MCF 10A (cell line): ENCODE measurements at regions of chr4 and their contacts with region 1.

Region 1: GRCh38 chr4:44760142-44760898 is 34.0 kb upstream of the GNPDA2 start:
- DNase-seq: peak; percentile 59
- H3K4me3 Mint-ChIP-seq: no peak overlapping the region
- H3K27ac Mint-ChIP-seq: no peak overlapping the region
- H3K4me1 Mint-ChIP-seq: peaks cover 6% of the 10 kb centered on the region
- H3K27me3 Mint-ChIP-seq: no peaks in the 10 kb centered on the region
- CTCF ChIP-seq: peak; percentile 48

Region 2: DNA sequence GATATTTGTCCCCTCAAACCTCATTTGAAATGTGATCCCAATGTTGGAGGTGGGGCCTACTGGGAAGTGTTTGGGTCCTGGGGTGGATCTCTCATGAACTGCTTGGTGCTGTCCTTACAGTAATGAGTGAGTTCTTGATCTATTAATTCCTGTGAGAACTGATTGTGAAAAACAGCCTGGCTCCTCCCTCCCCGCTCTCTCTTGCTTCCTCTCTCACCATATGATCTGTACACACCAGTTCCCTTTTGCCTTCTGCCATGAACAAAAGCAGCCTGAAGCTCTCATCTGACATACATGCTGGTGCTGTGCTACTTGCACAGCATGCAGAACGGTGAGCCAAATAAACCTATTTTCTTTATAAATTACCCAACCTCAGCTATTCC is 97.7 kb before region 1 on chr4:
- CTCF ChIA-PET with region 1: no interaction called
- POLR2A ChIA-PET with region 1: no interaction called
- intact Hi-C with region 1: no loop called
- DNase-seq: no peak
- H3K4me3 Mint-ChIP-seq: no peak overlapping the region
- H3K27ac Mint-ChIP-seq: no peak overlapping the region
- H3K4me1 Mint-ChIP-seq: peaks cover 13% of the 10 kb centered on the region
- H3K27me3 Mint-ChIP-seq: no peaks in the 10 kb centered on the region
- CTCF ChIP-seq: no peak

Region 3: DNA sequence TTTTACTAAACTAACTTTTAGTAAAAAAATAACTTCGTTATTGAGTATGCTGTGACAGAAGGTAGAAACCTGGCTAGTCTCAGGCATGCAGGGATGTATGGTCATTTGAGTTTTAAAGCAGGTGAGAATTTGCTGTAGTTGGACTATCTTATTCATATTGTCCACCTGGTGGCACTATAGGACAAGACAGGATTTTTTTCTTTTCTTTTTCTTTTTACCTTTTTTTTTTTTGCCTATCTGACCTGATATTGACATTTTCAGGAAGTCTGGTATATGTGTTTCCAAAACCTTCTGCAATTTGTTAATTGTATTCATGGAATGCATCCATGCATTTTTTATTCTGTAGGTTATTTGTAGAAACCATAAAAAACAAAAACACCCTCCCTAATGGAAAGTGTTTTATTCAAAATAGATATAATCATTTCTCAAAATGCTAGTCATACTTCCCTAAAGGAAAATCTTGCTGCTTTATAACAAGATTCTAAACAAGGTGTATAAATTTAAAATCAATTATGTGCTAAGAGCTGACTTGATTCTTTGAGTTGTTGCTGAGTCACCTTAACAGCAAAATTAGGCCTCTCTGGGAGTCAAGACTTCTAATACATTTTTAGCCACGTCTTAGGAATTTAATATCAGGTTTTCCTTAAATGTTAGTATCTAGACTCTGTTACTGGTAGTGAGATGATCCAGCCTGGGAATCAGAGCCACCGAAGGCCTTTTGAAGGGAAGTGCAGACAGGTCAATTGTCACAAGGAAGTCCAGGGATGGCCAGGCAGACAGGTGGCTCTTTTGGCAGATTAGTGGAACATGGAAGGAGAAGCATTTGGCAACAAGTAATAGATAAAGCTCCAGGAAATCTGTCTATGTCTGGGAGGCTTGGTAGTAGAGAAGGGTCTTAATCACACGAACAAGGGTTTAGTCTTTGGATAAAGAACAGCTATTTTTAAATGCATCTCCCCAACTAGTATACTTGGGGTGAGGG is 167.4 kb after region 1 on chr4:
- CTCF ChIA-PET with region 1: interaction called, 7 read pairs
- POLR2A ChIA-PET with region 1: no interaction called
- intact Hi-C with region 1: loop called (anchors 1 kb)
- DNase-seq: peak; percentile 66
- H3K4me3 Mint-ChIP-seq: no peak overlapping the region
- H3K27ac Mint-ChIP-seq: no peak overlapping the region
- H3K4me1 Mint-ChIP-seq: no peaks in the 10 kb centered on the region
- H3K27me3 Mint-ChIP-seq: no peaks in the 10 kb centered on the region
- CTCF ChIP-seq: peak; percentile 60

Region 4: GRCh38 chr4:45453258-45453853 is 693.0 kb after region 1 on chr4:
- CTCF ChIA-PET with region 1: interaction called, 10 read pairs
- POLR2A ChIA-PET with region 1: no interaction called
- intact Hi-C with region 1: no loop called
- DNase-seq: peak; percentile 72
- H3K4me3 Mint-ChIP-seq: no peak overlapping the region
- H3K27ac Mint-ChIP-seq: no peak overlapping the region
- H3K4me1 Mint-ChIP-seq: no peaks in the 10 kb centered on the region
- H3K27me3 Mint-ChIP-seq: no peaks in the 10 kb centered on the region
- CTCF ChIP-seq: peak; percentile 59

Region 5: DNA sequence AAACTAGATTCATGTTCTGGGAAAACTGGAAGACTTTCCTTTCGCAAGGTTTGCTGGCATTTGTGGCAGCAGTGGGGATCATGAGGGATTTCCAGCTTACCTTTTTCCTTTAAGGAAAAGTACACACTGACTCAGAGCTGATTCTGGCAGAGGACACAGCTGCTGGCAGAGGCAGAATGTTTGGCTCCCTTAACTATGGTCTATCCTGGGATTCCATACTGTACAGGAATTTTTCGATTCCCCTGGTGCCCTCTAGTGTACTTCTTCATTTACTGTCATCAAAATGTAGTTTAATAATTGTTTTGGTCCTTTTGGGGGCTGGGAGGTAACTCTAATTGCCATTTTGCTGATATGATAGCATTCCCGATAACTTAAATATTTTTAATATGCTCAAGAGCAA is 1210.8 kb after region 1 on chr4:
- CTCF ChIA-PET with region 1: interaction called, 10 read pairs
- POLR2A ChIA-PET with region 1: no interaction called
- intact Hi-C with region 1: no loop called
- DNase-seq: peak; percentile 82
- H3K4me3 Mint-ChIP-seq: no peak overlapping the region
- H3K27ac Mint-ChIP-seq: peak overlapping the region; percentile 37
- H3K4me1 Mint-ChIP-seq: no peaks in the 10 kb centered on the region
- H3K27me3 Mint-ChIP-seq: no peaks in the 10 kb centered on the region
- CTCF ChIP-seq: peak; percentile 37

Region 6: DNA sequence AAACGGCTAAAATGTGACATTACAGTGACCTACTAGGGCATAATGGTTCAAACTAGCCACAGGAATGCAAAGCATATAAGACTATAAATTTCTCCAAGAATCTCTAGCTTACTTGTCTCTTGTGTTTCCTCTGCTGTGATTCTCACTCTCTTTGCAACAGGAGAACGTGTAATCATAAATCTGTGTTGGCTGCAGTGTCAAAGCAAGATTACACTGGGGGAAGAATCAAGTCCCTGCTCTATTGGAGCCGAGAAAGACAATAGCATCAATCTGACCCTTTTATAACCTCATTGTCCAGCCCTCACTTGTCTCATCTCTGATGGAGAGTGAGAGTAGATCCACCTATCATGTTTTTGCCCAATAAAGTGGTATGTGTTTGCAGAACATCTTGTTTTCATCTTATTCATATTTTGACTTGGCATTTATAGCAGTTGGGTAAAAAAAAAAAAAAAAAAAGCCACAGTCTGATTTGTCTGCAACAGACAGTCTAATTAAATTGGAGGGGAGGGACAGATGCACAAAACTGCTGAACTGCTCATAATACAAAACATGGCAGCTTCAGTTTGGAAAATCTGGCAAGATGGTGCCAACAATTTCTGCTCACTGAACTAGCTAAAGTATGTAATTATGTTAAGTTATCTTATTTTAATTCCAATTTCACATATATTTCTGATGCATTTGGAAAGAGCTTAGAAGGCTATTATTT is 1794.6 kb after region 1 on chr4:
- CTCF ChIA-PET with region 1: no interaction called
- POLR2A ChIA-PET with region 1: no interaction called
- intact Hi-C with region 1: loop called (anchors 5 kb)
- DNase-seq: no peak
- H3K4me3 Mint-ChIP-seq: no peak overlapping the region
- H3K27ac Mint-ChIP-seq: no peak overlapping the region
- H3K4me1 Mint-ChIP-seq: no peaks in the 10 kb centered on the region
- H3K27me3 Mint-ChIP-seq: no peaks in the 10 kb centered on the region
- CTCF ChIP-seq: no peak